Mucosa of descending colon (tissue), 3 donors: ENCODE measurements at regions of chr9 and their contacts with region 1.

Region 1: DNA sequence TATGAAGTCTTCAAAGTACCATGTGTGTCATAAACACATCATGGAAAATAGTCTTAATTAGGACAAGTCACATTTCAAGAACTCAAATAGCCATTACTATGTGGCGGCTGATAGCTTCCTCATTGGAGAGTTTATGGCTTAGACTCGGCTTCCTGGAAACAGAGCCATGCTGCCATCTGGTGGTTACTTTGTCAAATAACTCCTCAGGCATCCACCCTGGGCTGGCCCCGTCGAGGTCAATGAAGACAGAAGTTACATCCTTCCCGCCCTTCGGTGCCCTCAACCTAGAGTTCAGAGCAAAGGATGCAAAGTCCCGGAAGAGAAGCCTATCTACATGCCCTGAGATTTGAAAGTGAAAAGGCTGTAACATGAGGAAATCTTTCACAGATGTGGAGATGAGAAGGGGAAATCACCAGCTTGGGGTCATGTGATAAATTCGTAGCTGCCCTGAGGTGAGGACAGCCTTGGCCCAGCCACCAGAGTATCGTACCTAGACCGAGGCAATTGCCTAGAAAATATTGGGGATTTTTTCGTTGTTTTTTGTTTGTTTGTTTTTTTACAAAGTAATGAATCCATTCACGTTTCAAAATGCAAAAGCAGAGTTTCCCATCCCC is 45.5 kb upstream of the ZNF169 start:
- DNase-seq: peak; percentile 54 to 79 (median 70)
- ATAC-seq: peak; percentile 100
- H3K4me3 ChIP-seq: no peak overlapping the region
- H3K4me1 ChIP-seq: no peaks in the 10 kb centered on the region
- CTCF ChIP-seq: no peak

Region 2: GRCh38 chr9:93612796-93613154 is 600.8 kb before region 1 on chr9:
- intact Hi-C with region 1: no loop called
- DNase-seq: no peak
- ATAC-seq: peak; percentile 18
- H3K4me3 ChIP-seq: no peak overlapping the region
- H3K4me1 ChIP-seq: peaks cover 4% of the 10 kb centered on the region
- CTCF ChIP-seq: no peak

Region 3: DNA sequence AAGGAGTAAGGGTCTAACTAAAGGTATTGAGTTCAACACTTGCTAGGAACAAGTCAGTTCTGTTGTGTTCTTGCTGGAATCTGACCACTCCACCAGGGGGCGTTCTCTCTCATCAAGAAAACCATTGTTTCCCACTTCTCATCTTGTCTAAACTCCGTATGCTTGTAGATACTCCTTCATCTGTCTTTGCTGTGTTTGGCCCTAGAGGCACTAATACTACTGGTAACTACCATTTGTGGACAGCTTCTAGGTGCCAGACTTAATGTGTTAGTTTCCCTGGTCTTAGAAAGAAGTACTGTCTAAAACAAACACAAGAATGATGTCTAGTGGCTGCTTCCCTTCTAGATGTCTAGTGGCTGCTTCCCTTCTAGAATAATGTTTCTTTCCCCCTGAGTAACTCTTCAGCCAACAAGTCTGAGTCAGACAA is 148.1 kb before region 1 on chr9:
- intact Hi-C with region 1: loop called (anchors 2 to 5 kb)
- DNase-seq: peak in 2 of 3 donors; percentile 53 to 90
- ATAC-seq: peak; percentile 82
- H3K4me3 ChIP-seq: no peak overlapping the region
- H3K4me1 ChIP-seq: no peaks in the 10 kb centered on the region
- CTCF ChIP-seq: peak; percentile 70